Naive thymus-derived CD4-positive, alpha-beta T cell (primary cell): ENCODE measurements at regions of chr5 and their contacts with region 1.

Region 1: GRCh38 chr5:40679155-40679913 is 381 bp upstream of the PTGER4 start:
- DNase-seq: peak; percentile 82 to 96 (median 87)
- ATAC-seq: peak; percentile 83
- H3K4me3 ChIP-seq: peak overlapping the region; percentile 77
- H3K4me3 Mint-ChIP-seq: peak overlapping the region; percentile 93 to 100 (median 98)
- H3K27ac ChIP-seq: peak overlapping the region; percentile 99
- H3K27ac Mint-ChIP-seq: peak overlapping the region; percentile 87 to 98 (median 96)
- H3K4me1 ChIP-seq: peaks cover 27 to 38% of the 10 kb centered on the region in 2 donors
- H3K4me1 Mint-ChIP-seq: peaks cover 34 to 63% (median 55%) of the 10 kb centered on the region in 7 donors
- H3K27me3 ChIP-seq: no peaks in the 10 kb centered on the region
- H3K27me3 Mint-ChIP-seq: no peaks in the 10 kb centered on the region

Region 2: GRCh38 chr5:39209924-39210323 is 1469.4 kb before region 1 on chr5:
- CTCF ChIA-PET with region 1: no interaction called
- POLR2A ChIA-PET with region 1: no interaction called
- intact Hi-C with region 1: loop called (anchors 5 kb)
- DNase-seq: peak in 8 of 9 donors; percentile 77 to 86 (median 81)
- ATAC-seq: peak; percentile 84
- H3K4me3 ChIP-seq: peak overlapping the region; percentile 36
- H3K4me3 Mint-ChIP-seq: peak overlapping the region; percentile 70 to 98 (median 84)
- H3K27ac ChIP-seq: peak overlapping the region; percentile 93
- H3K27ac Mint-ChIP-seq: peak overlapping the region; percentile 93 to 99 (median 98)
- H3K4me1 ChIP-seq: peaks cover 91 to 98% of the 10 kb centered on the region in 2 donors
- H3K4me1 Mint-ChIP-seq: peaks cover 71 to 99% (median 95%) of the 10 kb centered on the region in 7 donors
- H3K27me3 ChIP-seq: no peaks in the 10 kb centered on the region
- H3K27me3 Mint-ChIP-seq: peaks cover 0 to 2% (median 0%) of the 10 kb centered on the region in 5 donors

Region 3: DNA sequence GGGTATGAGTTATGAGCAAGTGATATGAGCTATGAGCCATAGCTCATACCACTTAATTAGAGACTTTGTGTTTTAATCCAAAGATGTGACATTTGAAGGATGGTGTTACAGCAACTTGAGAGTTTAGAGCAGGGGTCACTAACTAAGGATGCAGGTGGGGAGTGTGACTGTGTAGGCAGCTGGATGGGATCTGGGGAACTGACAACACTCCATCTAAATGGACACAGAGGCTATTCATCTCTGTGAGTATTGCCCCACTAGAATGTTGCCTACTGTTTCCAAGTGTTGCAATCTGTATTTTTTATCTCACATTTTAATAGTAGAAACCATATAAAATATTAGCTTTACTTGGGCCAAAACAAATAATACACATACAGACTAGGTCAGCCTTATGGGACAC is 766.4 kb before region 1 on chr5:
- CTCF ChIA-PET with region 1: no interaction called
- POLR2A ChIA-PET with region 1: no interaction called
- intact Hi-C with region 1: no loop called
- DNase-seq: no peak
- ATAC-seq: no peak
- H3K4me3 ChIP-seq: no peak overlapping the region
- H3K4me3 Mint-ChIP-seq: no peak overlapping the region
- H3K27ac ChIP-seq: no peak overlapping the region
- H3K27ac Mint-ChIP-seq: no peak overlapping the region
- H3K4me1 ChIP-seq: no peaks in the 10 kb centered on the region
- H3K4me1 Mint-ChIP-seq: no peaks in the 10 kb centered on the region
- H3K27me3 ChIP-seq: no peaks in the 10 kb centered on the region
- H3K27me3 Mint-ChIP-seq: peaks cover 1 to 16% (median 14%) of the 10 kb centered on the region in 5 donors

Region 4: GRCh38 chr5:40386289-40386688 is 293.0 kb before region 1 on chr5:
- CTCF ChIA-PET with region 1: interaction called, 3 read pairs
- POLR2A ChIA-PET with region 1: no interaction called
- intact Hi-C with region 1: loop called in 1 of 2 experiments (anchors 2 kb)
- DNase-seq: no peak
- ATAC-seq: peak; percentile 62
- H3K4me3 ChIP-seq: no peak overlapping the region
- H3K4me3 Mint-ChIP-seq: peak overlapping the region in 3 of 10 donors; percentile 38 to 55 (median 48)
- H3K27ac ChIP-seq: peak overlapping the region; percentile 26
- H3K27ac Mint-ChIP-seq: peak overlapping the region in 4 of 9 donors; percentile 26 to 79 (median 54)
- H3K4me1 ChIP-seq: peaks cover 23 to 66% of the 10 kb centered on the region in 2 donors
- H3K4me1 Mint-ChIP-seq: peaks cover 37 to 86% (median 66%) of the 10 kb centered on the region in 7 donors
- H3K27me3 ChIP-seq: no peaks in the 10 kb centered on the region
- H3K27me3 Mint-ChIP-seq: no peaks in the 10 kb centered on the region

Region 5: GRCh38 chr5:40486437-40487275 is 192.7 kb before region 1 on chr5:
- CTCF ChIA-PET with region 1: no interaction called
- POLR2A ChIA-PET with region 1: interaction called, 3 read pairs
- intact Hi-C with region 1: loop called in 1 of 2 experiments (anchors 1 kb)
- DNase-seq: peak in 8 of 9 donors; percentile 31 to 76 (median 56)
- ATAC-seq: peak; percentile 81
- H3K4me3 ChIP-seq: no peak overlapping the region
- H3K4me3 Mint-ChIP-seq: peak overlapping the region in 4 of 10 donors; percentile 2 to 52 (median 48)
- H3K27ac ChIP-seq: no peak overlapping the region
- H3K27ac Mint-ChIP-seq: peak overlapping the region in 8 of 9 donors; percentile 5 to 87 (median 59)
- H3K4me1 ChIP-seq: peaks cover 6 to 12% of the 10 kb centered on the region in 2 donors
- H3K4me1 Mint-ChIP-seq: peaks cover 6 to 69% (median 30%) of the 10 kb centered on the region in 7 donors
- H3K27me3 ChIP-seq: no peaks in the 10 kb centered on the region
- H3K27me3 Mint-ChIP-seq: no peaks in the 10 kb centered on the region

Region 6: GRCh38 chr5:40652441-40653220 is 26.7 kb before region 1 on chr5:
- CTCF ChIA-PET with region 1: interaction called, 6 read pairs
- POLR2A ChIA-PET with region 1: interaction called, 79 read pairs
- intact Hi-C with region 1: loop called (anchors 1 kb)
- DNase-seq: peak in 3 of 9 donors; percentile 25 to 37 (median 27)
- ATAC-seq: peak; percentile 50
- H3K4me3 ChIP-seq: peak overlapping the region; percentile 15
- H3K4me3 Mint-ChIP-seq: peak overlapping the region; percentile 39 to 88 (median 82)
- H3K27ac ChIP-seq: peak overlapping the region; percentile 74
- H3K27ac Mint-ChIP-seq: peak overlapping the region; percentile 89 to 96 (median 94)
- H3K4me1 ChIP-seq: peaks cover 48 to 54% of the 10 kb centered on the region in 2 donors
- H3K4me1 Mint-ChIP-seq: peaks cover 63 to 83% (median 78%) of the 10 kb centered on the region in 7 donors
- H3K27me3 ChIP-seq: no peaks in the 10 kb centered on the region
- H3K27me3 Mint-ChIP-seq: no peaks in the 10 kb centered on the region

Region 7: DNA sequence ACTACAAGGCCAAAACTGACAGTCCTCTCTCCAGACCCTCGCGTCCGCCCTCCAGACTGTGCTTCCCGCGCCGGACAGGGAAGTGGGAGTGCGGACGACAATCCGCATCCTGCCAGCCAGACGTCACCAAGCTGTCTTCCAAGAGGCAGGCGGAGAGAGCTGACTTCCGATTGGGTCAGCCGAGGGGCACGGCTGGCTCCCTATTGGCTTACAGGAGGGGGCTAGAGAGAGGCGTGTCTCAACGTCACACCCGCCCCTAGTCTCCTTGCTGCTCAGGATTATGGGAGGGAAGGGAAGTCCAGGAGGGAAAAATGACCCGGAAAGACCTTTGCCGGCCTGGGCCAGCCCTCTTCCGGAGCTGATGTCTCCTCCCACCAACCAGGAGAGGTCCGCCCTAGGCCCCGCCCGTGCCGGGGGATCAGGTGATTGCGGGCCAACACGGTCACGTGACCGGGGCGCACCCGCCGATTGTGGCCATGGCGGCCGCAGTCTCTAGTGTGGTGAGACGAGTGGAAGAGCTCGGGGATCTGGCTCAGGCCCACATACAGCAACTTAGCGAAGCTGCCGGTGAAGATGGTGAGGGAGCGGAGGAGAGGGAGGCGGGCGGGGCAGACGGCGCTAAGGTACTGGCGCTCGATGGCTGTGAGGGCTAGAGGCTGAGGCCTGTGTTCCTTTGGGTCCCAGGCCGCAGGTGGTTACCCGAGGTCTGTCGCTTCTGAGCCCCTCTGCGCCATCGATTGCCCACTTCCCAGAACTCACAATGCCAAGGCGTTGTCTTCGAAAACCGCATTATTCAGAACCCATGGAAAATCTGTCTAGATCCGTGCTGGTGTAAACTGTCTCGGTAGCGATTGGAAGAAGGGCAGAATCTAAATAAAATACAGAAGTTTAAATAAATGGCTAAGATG is 1224.8 kb after region 1 on chr5 and contains the start of gene RIMOC1:
- CTCF ChIA-PET with region 1: no interaction called
- POLR2A ChIA-PET with region 1: interaction called, 3 read pairs
- intact Hi-C with region 1: loop called (anchors 2 to 10 kb)
- DNase-seq: peak; percentile 94 to 98 (median 97)
- ATAC-seq: peak; percentile 94
- H3K4me3 ChIP-seq: peak within 1 kb of the TSS; percentile 90
- H3K4me3 Mint-ChIP-seq: peak within 1 kb of the TSS; percentile 84 to 99 (median 98)
- H3K27ac ChIP-seq: peak within 1 kb of the TSS; percentile 85
- H3K27ac Mint-ChIP-seq: peak within 1 kb of the TSS; percentile 97 to 100 (median 99)
- H3K4me1 ChIP-seq: peaks cover 16 to 18% of the 10 kb centered on the region in 2 donors
- H3K4me1 Mint-ChIP-seq: peaks cover 21 to 54% (median 46%) of the 10 kb centered on the region in 7 donors
- H3K27me3 ChIP-seq: no peaks in the 10 kb centered on the region
- H3K27me3 Mint-ChIP-seq: peaks cover 0 to 11% (median 0%) of the 10 kb centered on the region in 5 donors
- total RNA-seq, gene RIMOC1: 13.8 to 40.6 (median 27.5) TPM